Motor neuron (in vitro differentiated cells): ENCODE measurements at regions of chr16 and their contacts with region 1.

Region 1: DNA sequence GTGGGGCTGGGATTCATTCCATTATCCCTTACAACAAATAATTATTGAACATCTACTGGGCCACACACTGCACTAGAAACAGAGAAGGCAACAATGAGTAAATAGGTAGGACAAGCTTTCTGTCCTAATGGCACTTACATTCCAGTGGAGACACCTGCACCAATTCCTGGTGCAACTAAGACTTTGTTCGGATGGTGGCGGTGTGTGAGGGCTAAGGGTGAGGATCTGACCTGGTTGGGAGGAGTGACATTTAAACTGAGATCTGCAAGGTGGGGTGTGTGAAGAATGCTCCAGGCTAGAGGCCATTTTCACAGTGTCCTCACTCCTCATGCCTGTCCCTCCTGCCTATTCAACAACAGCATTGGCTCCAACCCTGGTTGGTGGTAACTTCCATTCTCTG is 510.0 kb downstream of the XYLT1 start:
- ATAC-seq: no peak
- H3K4me3 ChIP-seq: no peak overlapping the region
- H3K27ac ChIP-seq: no peak overlapping the region
- H3K4me1 ChIP-seq: no peaks in the 10 kb centered on the region

Region 2: GRCh38 chr16:15576960-15577958 is 1383.5 kb before region 1 on chr16:
- in situ Hi-C with region 1: no loop called
- ATAC-seq: peak in 3 of 8 experiments; percentile 49 to 77 (median 66)
- H3K4me3 ChIP-seq: no peak overlapping the region
- H3K27ac ChIP-seq: no peak overlapping the region
- H3K4me1 ChIP-seq: no peaks in the 10 kb centered on the region

Region 3: GRCh38 chr16:16908077-16908476 is 52.7 kb before region 1 on chr16:
- in situ Hi-C with region 1: loop called in 1 of 9 experiments (anchors 10 kb)
- ATAC-seq: no peak
- H3K4me3 ChIP-seq: no peak overlapping the region
- H3K27ac ChIP-seq: no peak overlapping the region
- H3K4me1 ChIP-seq: no peaks in the 10 kb centered on the region

Region 4: DNA sequence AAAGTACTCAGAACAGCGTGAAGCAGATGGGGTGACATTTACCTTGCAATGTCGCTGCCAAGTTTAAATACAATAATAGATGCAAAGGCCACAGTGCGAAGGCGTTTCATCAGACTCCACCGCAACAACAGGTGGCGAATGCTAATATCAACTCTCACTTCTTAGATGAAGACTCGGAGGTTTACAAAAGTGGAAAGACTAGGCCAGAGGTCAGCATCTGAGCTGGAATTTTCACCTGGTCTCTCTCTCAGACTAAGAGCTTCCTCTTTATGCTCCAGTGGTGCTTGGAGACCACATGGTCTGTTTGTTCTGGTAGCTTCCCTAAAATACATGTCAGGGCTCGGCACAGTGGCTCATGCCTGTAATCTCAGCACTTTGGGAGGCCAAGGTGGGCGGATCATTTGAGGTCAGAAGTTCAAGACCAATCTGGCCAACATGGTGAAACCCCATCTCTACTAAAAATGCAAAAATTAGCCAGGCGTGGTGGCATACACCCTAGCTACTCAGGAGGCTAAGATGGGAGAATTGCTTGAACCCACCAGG is 340.9 kb after region 1 on chr16:
- in situ Hi-C with region 1: no loop called
- ATAC-seq: no peak
- H3K4me3 ChIP-seq: no peak overlapping the region
- H3K27ac ChIP-seq: no peak overlapping the region
- H3K4me1 ChIP-seq: peaks cover 13 to 17% of the 10 kb centered on the region in 2 donors